Posterior cingulate gyrus (tissue), 11 donors: ENCODE measurements at regions of chr7 and their contacts with region 1.

Region 1: DNA sequence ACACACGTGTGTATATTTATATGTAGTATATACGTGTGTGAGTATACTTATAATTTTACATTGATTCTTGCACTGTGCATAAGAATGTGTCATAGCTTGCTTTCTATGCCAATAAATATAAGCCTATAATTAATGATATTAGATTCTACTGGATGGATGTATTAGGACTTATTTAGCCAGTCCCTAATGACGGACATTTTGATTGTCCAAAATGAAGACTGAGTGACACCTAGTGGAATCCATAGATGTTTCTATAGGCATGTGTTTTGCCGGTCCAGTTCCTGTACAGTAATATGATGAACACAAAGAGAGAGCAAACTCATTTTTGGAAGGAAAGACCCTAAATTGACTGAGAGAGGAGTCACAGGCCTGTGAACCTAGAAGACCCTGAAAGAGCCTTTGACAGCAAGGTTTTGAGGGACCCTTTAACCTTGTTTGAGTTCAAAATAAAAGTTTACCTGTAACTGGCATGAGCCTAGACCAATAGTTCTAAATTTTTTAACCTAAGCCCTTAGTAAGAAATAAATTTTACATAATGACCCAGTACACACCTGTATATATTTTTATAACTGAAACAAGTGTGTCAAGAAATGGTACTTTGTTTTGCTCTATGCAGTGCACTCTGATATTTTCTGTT is 42.4 kb upstream of the AGBL3 start:
- DNase-seq: no peak

Region 2: GRCh38 chr7:134891262-134891695 is 52.6 kb before region 1 on chr7:
- intact Hi-C with region 1: loop called (anchors 5 kb)
- DNase-seq: peak; percentile 55 to 96 (median 72)